Activated CD8-positive, alpha-beta T cell treated with anti-CD3 and anti-CD28 coated beads for 36 hours (primary cell): ENCODE measurements at regions of chr9 and their contacts with region 1.

Region 1: GRCh38 chr9:112180387-112180881 is 5.3 kb upstream of the SUSD1 start:
- DNase-seq: peak; percentile 81
- ATAC-seq: peak; percentile 91
- H3K4me3 Mint-ChIP-seq: no peak overlapping the region
- H3K27ac Mint-ChIP-seq: peak overlapping the region; percentile 27
- H3K4me1 Mint-ChIP-seq: peaks cover 30% of the 10 kb centered on the region
- H3K27me3 Mint-ChIP-seq: peaks cover 11% of the 10 kb centered on the region
- CTCF ChIP-seq: no peak

Region 2: GRCh38 chr9:111983484-111983908 is 196.9 kb before region 1 on chr9:
- CTCF ChIA-PET with region 1: no interaction called
- POLR2A ChIA-PET with region 1: no interaction called
- intact Hi-C with region 1: no loop called
- DNase-seq: peak; percentile 34
- ATAC-seq: peak; percentile 63
- H3K4me3 Mint-ChIP-seq: no peak overlapping the region
- H3K27ac Mint-ChIP-seq: peak overlapping the region; percentile 78
- H3K4me1 Mint-ChIP-seq: peaks cover 38% of the 10 kb centered on the region
- H3K27me3 Mint-ChIP-seq: no peaks in the 10 kb centered on the region
- CTCF ChIP-seq: no peak

Region 3: GRCh38 chr9:112333639-112334431 is 153.4 kb after region 1 on chr9:
- CTCF ChIA-PET with region 1: interaction called, 4 read pairs
- POLR2A ChIA-PET with region 1: no interaction called
- intact Hi-C with region 1: loop called (anchors 5 kb)
- DNase-seq: peak; percentile 94
- ATAC-seq: peak; percentile 88
- H3K4me3 Mint-ChIP-seq: peak overlapping the region; percentile 97
- H3K27ac Mint-ChIP-seq: peak overlapping the region; percentile 98
- H3K4me1 Mint-ChIP-seq: peaks cover 30% of the 10 kb centered on the region
- H3K27me3 Mint-ChIP-seq: no peaks in the 10 kb centered on the region
- CTCF ChIP-seq: peak; percentile 53